IMR-90 (cell line): ENCODE measurements at regions of chr6 and their contacts with region 1.

Region 1: GRCh38 chr6:31186052-31186734 is 15.7 kb upstream of the POU5F1 start:
- DNase-seq: no peak
- ATAC-seq: no peak
- H3K4me3 ChIP-seq: no peak overlapping the region
- H3K27ac ChIP-seq: no peak overlapping the region
- H3K4me1 ChIP-seq: no peaks in the 10 kb centered on the region
- H3K27me3 ChIP-seq: no peaks in the 10 kb centered on the region
- CTCF ChIP-seq: no peak
- POLR2A ChIP-seq: no peak
- RAD21 ChIP-seq: no peak

Region 2: DNA sequence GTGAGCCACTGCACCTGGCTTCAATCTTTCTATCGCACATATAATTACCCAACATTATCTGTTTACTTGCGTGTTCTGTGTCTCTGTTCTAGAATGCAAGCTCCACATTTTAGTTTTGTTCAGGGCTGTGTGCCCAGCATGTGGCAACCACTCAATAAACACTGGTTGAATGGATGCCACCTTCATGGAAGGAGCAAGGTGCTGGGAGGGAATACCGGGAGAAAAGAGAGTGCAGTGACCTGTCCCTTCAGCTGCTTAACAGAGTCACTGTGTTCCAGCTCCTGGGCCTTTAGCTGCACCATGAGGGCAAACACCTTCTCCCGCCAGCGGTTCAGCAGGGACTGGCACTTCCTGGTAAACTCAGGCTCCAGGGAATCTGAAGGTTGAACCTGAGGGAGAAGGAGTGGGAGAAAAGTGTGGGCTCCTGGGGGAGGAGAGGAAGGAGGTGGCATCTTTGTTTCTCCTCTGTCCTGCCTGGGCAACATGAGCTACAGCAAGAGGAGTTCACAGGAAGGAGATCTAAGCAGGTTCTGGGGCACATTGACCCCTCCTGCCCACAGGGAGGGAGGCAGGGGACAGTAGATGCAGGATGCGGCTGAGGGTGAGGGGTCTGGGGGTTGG is 36.3 kb before region 1 on chr6:
- CTCF ChIA-PET with region 1: no interaction called
- POLR2A ChIA-PET with region 1: interaction called, 18 read pairs
- dilution Hi-C with region 1: no loop called
- in situ Hi-C with region 1: no loop called
- intact Hi-C with region 1: no loop called
- DNase-seq: no peak
- ATAC-seq: no peak
- H3K4me3 ChIP-seq: no peak overlapping the region
- H3K27ac ChIP-seq: no peak overlapping the region
- H3K4me1 ChIP-seq: no peaks in the 10 kb centered on the region
- H3K27me3 ChIP-seq: no peaks in the 10 kb centered on the region
- CTCF ChIP-seq: no peak
- POLR2A ChIP-seq: no peak
- RAD21 ChIP-seq: no peak

Region 3: DNA sequence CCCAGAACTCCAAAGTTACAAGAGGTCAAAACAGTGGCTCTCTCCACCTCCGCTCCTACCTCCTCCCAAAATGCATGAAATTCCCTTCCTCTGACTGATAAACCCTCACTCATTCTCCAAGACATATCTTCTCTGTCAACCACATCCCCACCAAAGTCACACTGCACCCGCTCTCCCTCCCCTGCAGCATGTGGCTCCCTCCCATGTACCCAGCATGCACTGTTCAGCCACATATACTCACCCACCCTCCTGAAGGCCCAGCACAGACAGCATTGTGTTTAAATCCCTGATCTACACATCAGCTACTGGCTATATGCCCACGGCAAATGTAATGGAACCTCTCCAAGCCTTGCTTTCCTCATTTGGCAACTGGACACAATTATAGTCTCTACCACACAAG is 10.2 kb before region 1 on chr6:
- CTCF ChIA-PET with region 1: no interaction called
- POLR2A ChIA-PET with region 1: no interaction called
- dilution Hi-C with region 1: no loop called
- in situ Hi-C with region 1: no loop called
- intact Hi-C with region 1: no loop called
- DNase-seq: peak; percentile 69
- ATAC-seq: peak; percentile 83
- H3K4me3 ChIP-seq: no peak overlapping the region
- H3K27ac ChIP-seq: no peak overlapping the region
- H3K4me1 ChIP-seq: peaks cover 8% of the 10 kb centered on the region
- H3K27me3 ChIP-seq: no peaks in the 10 kb centered on the region
- CTCF ChIP-seq: no peak
- POLR2A ChIP-seq: no peak
- RAD21 ChIP-seq: no peak

Region 4: GRCh38 chr6:31958741-31959739 is 772.8 kb after region 1 on chr6 and contains the starts of genes NELFE and SKIC2:
- CTCF ChIA-PET with region 1: no interaction called
- POLR2A ChIA-PET with region 1: no interaction called
- dilution Hi-C with region 1: no loop called
- in situ Hi-C with region 1: no loop called
- intact Hi-C with region 1: no loop called
- DNase-seq: peak; percentile 98
- ATAC-seq: peak; percentile 99
- H3K4me3 ChIP-seq: peak within 1 kb of the TSS; percentile 75
- H3K27ac ChIP-seq: peak within 1 kb of the TSS; percentile 74
- H3K4me1 ChIP-seq: peaks cover 7% of the 10 kb centered on the region; the same call in 1 of the 2 replicates
- H3K27me3 ChIP-seq: no peaks in the 10 kb centered on the region
- CTCF ChIP-seq: no peak
- POLR2A ChIP-seq: peak; percentile 64
- RAD21 ChIP-seq: peak; percentile 9; the same call in 1 of the 2 replicates
- total RNA-seq, gene NELFE: 76.0 and 90.8 TPM in 2 replicates
- total RNA-seq, gene SKIC2: 30.6 and 34.7 TPM in 2 replicates